Gastrocnemius medialis (tissue), 4 donors: ENCODE measurements at regions of chr6 and their contacts with region 1.

Region 1: DNA sequence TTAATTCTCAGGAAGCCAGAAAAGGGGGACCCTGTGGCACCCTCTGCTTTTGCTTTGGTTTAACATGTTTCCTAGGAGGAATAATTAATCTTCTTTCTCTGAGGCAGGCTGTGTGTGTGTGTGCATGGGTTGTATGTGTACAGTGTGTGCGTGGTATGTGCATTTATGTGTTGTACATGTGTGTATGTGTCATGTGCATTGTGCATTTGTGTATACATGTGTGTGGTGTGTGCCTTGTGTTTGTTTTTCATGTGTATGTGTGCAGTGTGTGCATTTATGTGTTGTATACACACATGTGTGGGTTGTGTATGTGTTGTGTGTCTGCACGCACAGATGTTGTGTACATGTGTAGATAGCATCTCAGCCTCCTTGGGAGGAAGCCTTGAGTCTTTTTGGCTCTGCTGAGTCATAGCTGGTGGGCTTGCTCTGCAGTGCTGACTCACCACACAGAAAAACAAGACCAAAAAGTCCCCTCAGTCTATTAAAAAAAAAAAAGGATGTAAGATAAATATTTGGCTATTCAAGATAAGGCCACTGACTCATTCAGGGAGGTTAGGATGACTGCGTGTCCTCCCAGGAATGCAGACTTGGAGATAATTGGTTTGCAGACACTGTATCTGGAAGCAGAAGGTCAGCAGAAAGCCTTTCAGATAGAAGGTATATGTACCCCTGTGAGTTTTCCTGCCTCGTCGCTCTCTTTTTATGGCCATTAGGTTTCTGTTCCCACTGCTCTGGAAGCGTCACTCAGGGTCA is 58.6 kb downstream of the SYNJ2 start:
- DNase-seq: peak in 1 of 2 donors; percentile 8
- ATAC-seq: no peak
- H3K4me3 ChIP-seq: no peak overlapping the region
- H3K27ac ChIP-seq: peak overlapping the region; percentile 93 to 99 (median 96)
- H3K4me1 ChIP-seq: peaks cover 38 to 39% of the 10 kb centered on the region in 2 donors
- H3K27me3 ChIP-seq: no peaks in the 10 kb centered on the region
- CTCF ChIP-seq: no peak
- POLR2A ChIP-seq: peak in 1 of 2 donors; percentile 4

Region 2: DNA sequence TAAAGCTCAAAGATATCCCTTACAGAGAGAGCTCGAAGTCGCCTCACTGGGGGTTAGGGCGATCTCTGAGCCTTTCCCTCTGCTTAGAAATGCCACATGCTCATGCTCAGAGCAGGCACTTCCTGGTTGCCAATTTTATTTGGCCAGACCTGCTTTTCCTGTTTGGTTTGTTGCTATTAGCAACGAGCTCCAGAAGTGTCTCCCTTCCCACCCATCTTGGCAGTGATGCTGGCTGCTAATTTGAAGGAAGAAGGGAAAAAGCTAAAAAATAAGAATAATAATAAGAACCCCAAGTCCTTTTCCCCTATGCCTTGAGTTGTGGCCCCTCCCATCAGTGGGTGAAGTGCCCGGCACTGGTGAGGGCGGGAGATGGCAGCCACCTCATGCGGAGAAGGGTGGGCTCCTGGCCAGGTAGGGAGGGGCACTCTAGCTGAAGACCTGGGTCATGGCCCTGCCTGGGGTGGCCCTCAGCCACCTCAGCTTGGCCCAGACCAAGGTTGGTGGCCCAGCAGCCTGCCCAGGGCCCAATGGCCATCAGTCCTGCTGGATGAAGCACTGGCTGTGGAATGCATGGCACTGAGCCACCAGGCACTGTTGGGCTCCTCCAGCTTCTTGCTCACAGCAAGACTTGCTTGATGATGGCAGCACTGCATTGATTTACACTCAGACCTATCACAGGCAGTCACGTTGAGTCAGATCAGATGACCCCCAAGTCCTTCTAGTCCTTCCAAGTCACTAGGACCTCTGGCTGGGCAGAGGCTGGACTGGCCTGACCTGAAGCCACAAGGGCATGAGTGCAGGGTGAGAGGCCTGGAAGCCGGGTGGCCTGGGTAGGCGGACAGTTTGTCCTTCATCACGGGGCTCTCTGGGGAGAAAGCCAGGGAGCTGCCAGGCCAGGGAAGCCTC is 20.5 kb after region 1 on chr6:
- in situ Hi-C with region 1: no loop called
- intact Hi-C with region 1: loop called (anchors 2 kb)
- DNase-seq: peak; percentile 78 to 88
- ATAC-seq: peak; percentile 85 to 87
- H3K4me3 ChIP-seq: peak overlapping the region in 2 of 4 donors; percentile 17 to 33
- H3K27ac ChIP-seq: peak overlapping the region; percentile 71 to 87 (median 80)
- H3K4me1 ChIP-seq: peaks cover 13 to 16% of the 10 kb centered on the region in 2 donors
- H3K27me3 ChIP-seq: no peaks in the 10 kb centered on the region
- CTCF ChIP-seq: no peak
- POLR2A ChIP-seq: peak; percentile 15

Region 3: DNA sequence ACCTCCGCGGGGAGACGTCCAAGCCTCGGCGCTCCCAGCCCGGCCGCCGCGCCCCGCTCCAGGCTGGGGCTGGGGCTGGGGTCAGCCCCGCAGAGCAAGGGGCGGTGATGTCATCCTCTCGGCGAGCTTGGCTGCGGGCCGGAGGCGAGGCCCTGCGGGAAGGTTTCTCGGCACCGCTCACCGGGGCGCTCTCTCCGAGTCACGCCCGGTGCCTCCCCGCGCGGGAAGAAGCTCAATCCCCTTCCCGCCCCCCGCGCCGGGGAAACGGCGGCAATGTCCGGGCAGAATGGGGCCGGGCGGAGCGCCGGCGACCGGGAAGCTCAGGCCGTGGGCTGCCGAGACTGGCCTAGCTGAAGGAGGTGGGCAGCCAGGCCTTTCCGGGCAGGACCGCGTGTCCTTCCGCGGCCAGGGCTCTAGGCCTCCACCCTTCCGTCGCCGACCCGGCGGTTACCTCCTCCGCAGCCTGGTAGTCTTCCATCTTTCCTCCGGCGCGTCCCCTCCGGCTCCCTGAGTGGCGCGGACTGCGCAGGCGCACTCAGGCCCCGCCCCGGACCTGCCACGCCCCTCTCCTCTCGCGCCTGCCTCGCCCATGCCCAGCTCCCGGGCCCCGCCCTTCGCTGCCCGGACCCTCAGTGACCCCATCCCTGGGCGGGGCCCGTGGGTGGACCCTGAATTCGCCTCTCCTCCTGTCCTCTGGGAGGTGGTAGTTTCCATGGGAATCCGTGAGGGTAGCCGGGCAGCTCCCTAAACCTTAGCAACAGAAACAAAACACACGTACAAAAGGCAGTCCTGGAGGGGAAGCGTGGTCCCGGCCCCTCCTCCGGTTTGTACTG is 604.2 kb after region 1 on chr6 and contains the start of gene DYNLT1:
- in situ Hi-C with region 1: no loop called
- intact Hi-C with region 1: loop called (anchors 10 kb)
- DNase-seq: peak; percentile 88 to 93
- ATAC-seq: peak; percentile 63 to 67
- H3K4me3 ChIP-seq: peak within 1 kb of the TSS; percentile 87 to 99 (median 96)
- H3K27ac ChIP-seq: peak within 1 kb of the TSS; percentile 97 to 100 (median 98)
- H3K4me1 ChIP-seq: peaks cover 47 to 51% of the 10 kb centered on the region in 2 donors
- H3K27me3 ChIP-seq: no peaks in the 10 kb centered on the region
- CTCF ChIP-seq: no peak
- POLR2A ChIP-seq: peak; percentile 100
- total RNA-seq, gene DYNLT1: 62.8 to 94.7 (median 67.3) TPM

Region 4: DNA sequence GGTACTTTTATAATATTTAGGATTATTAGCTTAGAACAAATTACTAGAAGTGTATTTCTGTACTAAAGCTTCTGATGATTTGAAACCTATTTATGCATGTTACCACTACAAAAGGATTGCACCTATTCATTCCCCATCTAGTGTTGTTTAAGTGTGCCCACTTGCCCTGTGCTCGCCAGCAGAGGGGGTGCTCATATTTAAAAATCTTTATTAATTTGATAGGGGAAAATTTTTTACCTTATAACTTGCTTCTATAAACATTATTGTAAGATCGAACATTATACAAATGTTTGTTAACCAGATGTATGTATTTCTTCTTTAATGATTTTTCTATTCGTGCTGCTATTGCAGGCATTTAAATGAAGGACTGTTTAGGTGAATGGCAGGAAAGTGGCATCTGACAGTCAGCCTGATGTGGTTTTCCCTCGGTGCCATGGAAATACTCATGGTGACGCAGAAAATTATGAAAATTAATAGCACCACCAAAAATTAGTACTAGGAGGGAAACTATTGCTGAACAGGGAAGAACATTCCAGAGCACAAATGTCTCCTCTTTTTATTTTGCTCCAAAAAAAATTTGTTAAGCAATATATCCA is 1084.9 kb after region 1 on chr6:
- in situ Hi-C with region 1: no loop called
- intact Hi-C with region 1: loop called (anchors 10 kb)
- DNase-seq: no peak
- ATAC-seq: no peak
- H3K4me3 ChIP-seq: no peak overlapping the region
- H3K27ac ChIP-seq: peak overlapping the region; percentile 89 to 93 (median 90)
- H3K4me1 ChIP-seq: peaks cover 16 to 40% of the 10 kb centered on the region in 2 donors
- H3K27me3 ChIP-seq: no peaks in the 10 kb centered on the region
- CTCF ChIP-seq: no peak
- POLR2A ChIP-seq: no peak